HepG2 (cell line): ENCODE measurements at regions of chr6 and their contacts with region 1.

Region 1: DNA sequence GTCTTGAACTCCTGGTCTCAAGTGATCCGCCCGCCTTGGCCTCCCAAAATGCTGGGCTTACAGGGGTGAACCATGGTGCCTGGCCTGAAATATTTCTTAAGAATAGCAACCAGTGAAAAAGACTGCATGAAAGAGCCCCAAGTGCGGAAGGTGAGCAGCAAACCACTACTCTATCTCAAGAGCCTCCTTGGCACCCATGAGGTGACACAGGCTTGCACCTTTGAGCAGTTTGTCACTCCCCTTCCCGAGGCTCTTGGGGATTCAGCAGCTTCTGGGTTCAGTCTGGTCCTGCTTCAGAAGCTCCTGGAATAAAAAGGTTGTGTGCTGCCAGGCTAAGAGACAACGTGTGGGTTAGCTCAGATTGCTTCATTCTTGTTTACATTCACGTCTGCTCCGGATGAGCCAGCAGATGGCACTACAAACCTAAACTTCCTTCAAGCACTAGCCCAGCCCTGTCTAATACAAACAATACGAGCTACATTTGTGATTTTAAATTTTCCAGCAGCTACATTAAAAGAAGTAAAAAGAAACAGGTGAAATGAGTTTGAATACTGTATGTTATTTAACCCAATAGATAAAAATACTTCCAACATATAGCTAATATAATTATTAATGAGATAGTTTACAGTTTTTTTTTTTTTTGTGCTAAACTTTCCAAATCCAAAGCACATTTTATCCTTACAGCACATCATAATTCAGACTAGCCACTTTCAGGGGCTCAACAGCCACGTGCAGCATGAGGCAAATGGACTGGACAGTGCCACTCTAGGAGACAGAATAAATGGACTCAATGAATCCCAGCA is 46.2 kb downstream of the GJA10 start:
- DNase-seq: peak; percentile 81
- ATAC-seq: peak; percentile 98
- H3K4me3 ChIP-seq: peak overlapping the region in 1 of 3 experiments; percentile 15; a peak in 1 of 6 replicates
- H3K27ac ChIP-seq: no peak overlapping the region
- H3K4me1 ChIP-seq: peaks cover 20% of the 10 kb centered on the region
- H3K27me3 ChIP-seq: peaks cover 0 to 31% of the 10 kb centered on the region in 2 experiments; a peak in 3 of 5 replicates
- CTCF ChIP-seq: peak; percentile 87
- EP300 ChIP-seq: no peak
- POLR2A ChIP-seq: no peak
- RAD21 ChIP-seq: peak; percentile 82

Region 2: GRCh38 chr6:89787660-89788328 is 152.6 kb before region 1 on chr6:
- CTCF ChIA-PET with region 1: no interaction called
- POLR2A ChIA-PET with region 1: no interaction called
- in situ Hi-C with region 1: no loop called
- intact Hi-C with region 1: no loop called
- DNase-seq: no peak
- ATAC-seq: no peak
- H3K4me3 ChIP-seq: no peak overlapping the region
- H3K27ac ChIP-seq: no peak overlapping the region
- H3K4me1 ChIP-seq: peaks cover 17% of the 10 kb centered on the region
- H3K27me3 ChIP-seq: no peaks in the 10 kb centered on the region
- CTCF ChIP-seq: no peak
- EP300 ChIP-seq: no peak
- POLR2A ChIP-seq: no peak
- RAD21 ChIP-seq: no peak

Region 3: DNA sequence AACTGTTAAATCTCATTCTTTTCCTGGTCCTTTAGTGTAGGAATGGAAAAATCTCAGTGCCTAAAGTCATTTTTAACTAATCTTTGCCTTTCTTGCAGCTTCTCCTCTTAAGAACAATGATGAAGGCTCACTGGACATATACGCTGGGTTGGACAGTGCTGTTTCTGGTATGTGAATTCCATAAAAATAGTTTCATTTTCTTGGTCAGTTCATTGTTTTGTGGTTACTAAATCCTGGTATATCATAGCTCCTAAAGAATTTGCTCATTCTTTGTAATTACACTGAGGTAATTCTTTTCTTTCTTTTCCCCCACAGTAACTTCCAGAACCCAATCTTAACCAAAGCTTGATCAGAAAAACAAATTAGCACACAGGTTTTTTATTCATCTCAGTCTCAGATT is 87.4 kb before region 1 on chr6:
- CTCF ChIA-PET with region 1: no interaction called
- POLR2A ChIA-PET with region 1: no interaction called
- in situ Hi-C with region 1: no loop called
- intact Hi-C with region 1: no loop called
- DNase-seq: no peak
- ATAC-seq: no peak
- H3K4me3 ChIP-seq: no peak overlapping the region
- H3K27ac ChIP-seq: no peak overlapping the region
- H3K4me1 ChIP-seq: no peaks in the 10 kb centered on the region
- H3K27me3 ChIP-seq: no peaks in the 10 kb centered on the region
- CTCF ChIP-seq: no peak
- EP300 ChIP-seq: no peak
- POLR2A ChIP-seq: no peak
- RAD21 ChIP-seq: no peak

Region 4: DNA sequence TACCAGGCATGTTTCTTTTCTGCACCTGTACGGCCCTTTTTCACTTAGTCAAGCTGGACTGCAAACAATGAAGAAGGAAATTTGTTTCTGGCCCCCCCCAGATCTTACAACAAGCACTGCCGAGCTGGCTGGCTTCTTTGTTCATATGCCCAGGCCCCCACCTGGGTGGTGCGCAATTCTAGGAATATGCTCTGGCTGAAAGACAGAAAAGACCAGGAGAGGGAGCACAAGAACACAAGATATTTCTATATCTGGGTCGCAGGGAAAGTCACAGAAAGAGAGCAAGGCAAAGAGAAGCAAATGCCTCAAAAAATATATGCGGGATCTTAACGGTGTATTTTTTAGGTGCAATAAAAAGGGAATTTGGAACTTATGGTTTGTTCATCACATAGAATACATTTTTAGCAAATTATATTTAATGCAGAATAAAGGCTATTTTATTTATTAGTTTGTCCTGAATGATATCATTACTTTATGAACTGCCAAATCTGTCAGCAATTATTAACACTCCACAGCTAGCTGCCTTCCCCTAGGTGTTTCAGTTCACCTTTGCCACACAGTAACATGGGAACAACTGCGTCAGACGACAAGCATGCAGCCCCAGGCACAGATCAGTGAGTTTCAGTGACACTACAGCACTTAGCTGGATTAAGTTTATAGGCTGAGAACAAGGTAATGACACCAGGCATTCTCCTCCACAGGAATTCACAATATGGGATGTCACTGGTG is 30.3 kb after region 1 on chr6:
- CTCF ChIA-PET with region 1: no interaction called
- POLR2A ChIA-PET with region 1: no interaction called
- in situ Hi-C with region 1: no loop called
- intact Hi-C with region 1: loop called (anchors 2 kb)
- DNase-seq: peak; percentile 37
- ATAC-seq: peak; percentile 89
- H3K4me3 ChIP-seq: no peak overlapping the region
- H3K27ac ChIP-seq: no peak overlapping the region
- H3K4me1 ChIP-seq: no peaks in the 10 kb centered on the region
- H3K27me3 ChIP-seq: peaks cover 2 to 23% of the 10 kb centered on the region in 2 experiments; a peak in 3 of 5 replicates
- CTCF ChIP-seq: peak; percentile 58
- EP300 ChIP-seq: no peak
- POLR2A ChIP-seq: no peak
- RAD21 ChIP-seq: no peak

Region 5: DNA sequence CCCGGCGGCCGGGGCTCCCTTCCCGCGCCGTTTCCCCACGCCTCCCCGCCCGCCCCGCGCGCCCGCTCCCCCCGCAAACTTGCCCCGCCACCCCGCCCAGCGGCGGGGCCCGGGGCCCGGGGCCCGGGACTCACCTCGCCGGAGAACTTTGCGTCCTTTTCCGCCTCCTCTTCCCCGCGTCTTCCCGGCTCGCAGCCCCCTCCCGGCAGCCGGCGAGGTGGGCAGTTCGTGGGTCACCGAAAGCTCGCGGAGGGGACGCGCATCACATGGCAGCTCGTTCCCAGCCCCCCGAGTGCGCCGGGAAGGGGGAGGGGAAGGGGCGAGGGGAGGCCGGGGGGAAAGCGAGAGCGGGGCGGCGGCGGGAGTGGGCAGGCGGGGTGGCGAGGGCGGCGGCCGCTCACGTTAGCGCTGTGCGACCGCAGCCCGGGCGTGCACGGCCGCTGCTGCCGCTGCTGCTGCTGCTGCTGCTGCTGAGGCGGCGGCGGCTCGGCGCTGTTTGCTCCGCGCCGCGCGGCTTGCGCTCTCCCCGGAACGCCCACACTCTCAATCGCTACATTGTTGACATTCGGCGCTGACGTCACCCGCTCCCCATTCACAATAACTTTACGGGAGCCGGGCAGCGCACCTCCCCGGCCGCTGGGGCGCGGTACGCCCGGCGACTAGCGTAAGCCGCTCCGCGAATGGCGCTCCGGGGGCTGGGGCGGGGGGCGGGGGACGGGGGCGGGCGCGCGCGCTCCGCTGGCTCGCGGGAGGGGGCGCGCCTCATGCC is 356.1 kb after region 1 on chr6 and contains the start of gene BACH2:
- CTCF ChIA-PET with region 1: no interaction called
- POLR2A ChIA-PET with region 1: no interaction called
- in situ Hi-C with region 1: loop called (anchors 10 kb)
- intact Hi-C with region 1: loop called (anchors 5 kb)
- DNase-seq: peak; percentile 73
- ATAC-seq: peak; percentile 86
- H3K4me3 ChIP-seq: peak within 1 kb of the TSS; percentile 40 to 61 (median 56); a peak in 4 of 6 replicates
- H3K27ac ChIP-seq: no peak within 1 kb of the TSS
- H3K4me1 ChIP-seq: peaks cover 16% of the 10 kb centered on the region
- H3K27me3 ChIP-seq: peaks cover 8 to 68% of the 10 kb centered on the region in 2 experiments
- CTCF ChIP-seq: no peak
- EP300 ChIP-seq: no peak
- POLR2A ChIP-seq: no peak
- RAD21 ChIP-seq: no peak
- total RNA-seq, gene BACH2: not detected in 2 replicates

Region 6: GRCh38 chr6:90393232-90393884 is 452.9 kb after region 1 on chr6:
- CTCF ChIA-PET with region 1: interaction called, 11 read pairs
- POLR2A ChIA-PET with region 1: no interaction called
- in situ Hi-C with region 1: no loop called
- intact Hi-C with region 1: loop called (anchors 1 kb)
- DNase-seq: peak; percentile 12
- ATAC-seq: peak; percentile 75
- H3K4me3 ChIP-seq: no peak overlapping the region
- H3K27ac ChIP-seq: no peak overlapping the region
- H3K4me1 ChIP-seq: no peaks in the 10 kb centered on the region
- H3K27me3 ChIP-seq: peaks cover 0 to 4% of the 10 kb centered on the region in 2 experiments; a peak in 1 of 5 replicates
- CTCF ChIP-seq: peak; percentile 67
- EP300 ChIP-seq: no peak
- POLR2A ChIP-seq: no peak
- RAD21 ChIP-seq: no peak

Region 7: GRCh38 chr6:90586836-90587638 is 646.6 kb after region 1 on chr6 and contains the start of gene MAP3K7:
- CTCF ChIA-PET with region 1: no interaction called
- POLR2A ChIA-PET with region 1: no interaction called
- in situ Hi-C with region 1: no loop called
- intact Hi-C with region 1: loop called (anchors 10 kb)
- DNase-seq: peak; percentile 95
- ATAC-seq: peak; percentile 97
- H3K4me3 ChIP-seq: peak within 1 kb of the TSS; percentile 97 to 100 (median 99)
- H3K27ac ChIP-seq: peak within 1 kb of the TSS; percentile 86
- H3K4me1 ChIP-seq: peaks cover 32% of the 10 kb centered on the region
- H3K27me3 ChIP-seq: no peaks in the 10 kb centered on the region; a peak in 1 of 5 replicates
- CTCF ChIP-seq: no peak
- EP300 ChIP-seq: no peak
- POLR2A ChIP-seq: peak; percentile 71 to 81
- RAD21 ChIP-seq: no peak
- total RNA-seq, gene MAP3K7: 24.4 and 29.6 TPM in 2 replicates